Activated CD4-positive, alpha-beta memory T cell treated with anti-CD3 and anti-CD28 coated beads, Interleukin-2, amount 10 ng/mL, durations not matched to agents 7 days and 5 days (primary cell): ENCODE measurements at regions of chr5 and their contacts with region 1.

Region 1: DNA sequence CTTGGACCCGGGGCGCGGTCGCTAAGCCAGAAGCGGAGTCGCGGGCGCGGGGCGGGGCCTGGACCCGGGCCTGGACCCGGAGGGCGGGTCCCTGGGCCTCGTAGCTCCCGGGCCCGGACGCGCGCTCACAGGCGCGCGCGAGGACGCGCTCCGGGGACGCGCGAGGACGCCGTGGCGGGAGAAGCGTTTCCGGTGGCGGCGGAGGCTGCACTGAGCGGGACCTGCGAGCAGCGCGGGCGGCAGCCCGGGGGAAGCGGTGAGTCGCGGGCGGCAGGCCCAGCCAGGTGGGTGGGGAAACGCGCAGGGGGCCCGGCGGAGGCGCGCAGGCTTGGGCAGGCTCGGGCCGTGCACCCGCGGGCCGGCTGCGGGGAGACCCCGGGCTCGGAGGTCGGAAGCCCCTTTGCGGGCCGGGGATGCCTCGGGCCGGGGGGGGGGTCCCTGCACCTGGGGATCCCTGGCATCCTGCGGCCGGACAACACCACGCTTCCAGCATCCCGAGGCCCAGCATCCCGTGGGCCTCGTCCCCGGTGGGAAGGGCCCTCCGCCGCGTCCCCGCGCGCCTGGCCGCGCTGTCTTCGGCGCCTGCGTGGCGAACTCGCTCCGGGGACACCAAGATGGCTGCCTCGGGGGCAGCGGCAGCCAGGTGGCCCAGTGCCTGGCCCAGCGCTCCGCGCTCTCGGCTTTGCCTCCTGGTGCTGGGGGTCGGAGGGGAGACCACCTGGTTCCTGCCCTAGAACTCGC is at the start of gene SFXN1:
- DNase-seq: peak; percentile 87
- H3K4me3 Mint-ChIP-seq: peak within 1 kb of the TSS; percentile 89
- H3K27ac Mint-ChIP-seq: peak within 1 kb of the TSS; percentile 84
- H3K4me1 Mint-ChIP-seq: peaks cover 44% of the 10 kb centered on the region
- H3K27me3 Mint-ChIP-seq: peaks cover 11% of the 10 kb centered on the region
- total RNA-seq, gene SFXN1: 206 to 216 TPM

Region 2: DNA sequence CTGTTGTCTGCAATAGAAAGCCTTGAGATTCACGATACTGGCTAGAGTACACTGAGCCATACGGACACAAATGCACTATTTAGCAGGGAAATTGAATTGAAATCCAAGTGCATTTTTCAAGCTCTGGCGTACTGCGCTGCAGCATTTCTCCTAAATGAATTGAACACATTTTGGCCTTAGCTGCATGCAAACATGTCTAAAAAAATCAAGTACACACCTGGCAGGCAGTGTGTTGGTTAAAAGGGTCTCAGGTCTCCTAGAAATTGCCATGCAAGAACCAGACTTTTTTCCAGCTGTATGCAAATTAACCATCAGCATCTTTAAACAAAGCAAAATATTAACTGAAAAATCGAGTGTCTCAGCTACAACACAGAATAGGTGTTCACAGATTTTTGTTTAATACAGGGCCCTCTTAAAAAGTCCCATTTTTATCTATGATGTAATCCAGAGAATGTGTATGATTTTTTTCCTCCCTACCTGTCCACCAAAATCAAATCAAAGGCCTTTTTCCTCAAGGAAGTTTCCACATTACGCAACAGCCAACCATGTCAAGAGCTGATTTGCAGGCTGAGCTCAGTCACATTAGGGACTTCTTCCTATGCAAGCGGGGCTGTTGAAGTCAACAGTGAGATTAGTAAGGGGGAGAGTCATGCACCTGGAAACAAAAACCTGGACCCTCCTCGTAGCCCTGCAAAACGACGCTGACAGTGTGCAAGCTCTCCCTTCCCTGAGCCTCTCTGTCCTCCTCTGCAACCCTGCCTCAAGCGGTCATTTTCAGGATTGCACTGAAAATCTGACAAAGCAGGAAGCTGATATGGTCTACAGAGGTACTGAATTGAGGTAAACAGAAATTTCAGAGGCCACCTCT is 14.2 kb before region 1 on chr5:
- CTCF ChIA-PET with region 1: interaction called, 24 read pairs
- POLR2A ChIA-PET with region 1: interaction called, 9 read pairs
- DNase-seq: peak; percentile 77
- H3K4me3 Mint-ChIP-seq: no peak overlapping the region
- H3K27ac Mint-ChIP-seq: no peak overlapping the region
- H3K4me1 Mint-ChIP-seq: peaks cover 7% of the 10 kb centered on the region
- H3K27me3 Mint-ChIP-seq: peaks cover 4% of the 10 kb centered on the region

Region 3: DNA sequence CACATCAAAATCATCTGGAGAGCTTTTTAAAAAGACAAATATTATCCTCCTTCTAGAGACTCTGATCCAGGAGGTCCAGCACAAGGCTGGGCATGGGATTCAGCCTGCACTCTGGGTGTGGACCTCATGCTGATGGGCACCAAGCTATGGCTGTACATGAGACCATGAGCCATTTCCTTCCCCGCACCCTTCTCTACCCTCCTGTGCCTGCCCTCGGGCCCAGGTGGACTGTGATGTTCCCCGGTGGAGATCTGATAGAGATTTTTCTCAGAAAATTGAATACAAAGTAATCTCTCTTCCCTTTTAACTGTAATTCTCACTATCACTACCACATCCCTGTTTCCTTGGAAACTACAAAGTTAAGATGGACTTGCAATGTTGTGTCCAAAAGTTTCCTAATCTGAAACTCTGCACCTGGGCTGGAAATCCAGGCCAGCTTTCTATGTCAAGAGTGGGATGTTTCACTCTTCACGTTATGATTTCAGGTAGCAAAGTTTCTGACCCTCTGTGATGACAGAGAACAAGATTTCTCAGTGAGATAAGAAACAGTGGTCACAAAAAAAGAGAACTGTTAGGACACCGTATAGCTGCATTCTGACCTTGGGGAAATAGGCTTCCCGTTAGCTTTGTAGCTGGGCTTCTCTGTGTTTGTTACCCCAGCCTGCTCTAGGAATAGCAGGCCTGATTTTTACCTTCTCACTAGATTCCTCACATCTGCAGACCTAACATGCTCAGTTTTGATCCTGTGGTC is 11.3 kb after region 1 on chr5:
- CTCF ChIA-PET with region 1: interaction called, 3 read pairs
- POLR2A ChIA-PET with region 1: interaction called, 20 read pairs
- DNase-seq: no peak
- H3K4me3 Mint-ChIP-seq: no peak overlapping the region
- H3K27ac Mint-ChIP-seq: peak overlapping the region; percentile 42
- H3K4me1 Mint-ChIP-seq: peaks cover 69% of the 10 kb centered on the region
- H3K27me3 Mint-ChIP-seq: no peaks in the 10 kb centered on the region

Region 4: DNA sequence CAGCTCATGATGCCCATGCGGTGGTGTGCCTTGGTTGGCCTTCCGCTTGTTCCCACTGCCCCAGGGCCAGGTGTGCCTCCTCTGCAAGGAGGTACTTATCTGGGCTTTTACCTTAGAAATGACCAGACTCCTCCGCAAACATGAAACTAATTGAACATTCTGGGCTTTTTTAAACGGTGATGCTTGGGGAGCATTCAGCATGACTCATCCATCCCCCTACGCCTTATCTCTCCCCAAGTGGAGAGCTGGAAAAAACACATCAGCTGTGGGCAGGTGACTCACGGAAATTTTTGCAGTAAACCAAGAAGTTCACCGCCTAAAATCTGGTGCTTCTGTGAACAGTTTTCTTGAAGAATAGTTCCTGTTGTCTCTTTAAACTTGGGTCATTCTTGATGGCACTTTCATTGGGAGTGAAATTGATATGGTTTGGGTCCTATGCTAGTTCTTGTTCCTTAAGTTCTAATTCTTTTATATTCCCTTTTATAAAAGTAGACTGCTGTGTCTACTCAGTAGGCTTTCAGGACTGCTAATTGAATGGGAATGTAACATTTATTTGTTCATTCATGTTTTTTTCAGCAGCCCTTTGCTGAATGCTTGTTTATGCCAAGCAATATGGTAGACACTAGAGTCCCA is 39.4 kb after region 1 on chr5:
- CTCF ChIA-PET with region 1: interaction called, 6 read pairs
- POLR2A ChIA-PET with region 1: interaction called, 97 read pairs
- DNase-seq: peak; percentile 83
- H3K4me3 Mint-ChIP-seq: peak overlapping the region; percentile 64
- H3K27ac Mint-ChIP-seq: peak overlapping the region; percentile 94
- H3K4me1 Mint-ChIP-seq: peaks cover 77% of the 10 kb centered on the region
- H3K27me3 Mint-ChIP-seq: no peaks in the 10 kb centered on the region